GM12878 (cell line): ENCODE measurements at regions of chr19 and their contacts with region 1.

Region 1: GRCh38 chr19:36489118-36489919 is at the start of gene ZNF566:
- DNase-seq: peak; percentile 92
- ATAC-seq: peak; percentile 96
- H3K4me3 ChIP-seq: peak within 1 kb of the TSS; percentile 79
- H3K27ac ChIP-seq: peak within 1 kb of the TSS; percentile 93
- H3K4me1 ChIP-seq: no peaks in the 10 kb centered on the region; the same call in 1 of the 2 replicates
- H3K27me3 ChIP-seq: no peaks in the 10 kb centered on the region
- CTCF ChIP-seq: no peak
- EP300 ChIP-seq: no peak
- POLR2A ChIP-seq: peak; percentile 78
- RAD21 ChIP-seq: no peak
- polyA plus RNA-seq, gene ZNF566: 2.5 to 4.0 TPM

Region 2: DNA sequence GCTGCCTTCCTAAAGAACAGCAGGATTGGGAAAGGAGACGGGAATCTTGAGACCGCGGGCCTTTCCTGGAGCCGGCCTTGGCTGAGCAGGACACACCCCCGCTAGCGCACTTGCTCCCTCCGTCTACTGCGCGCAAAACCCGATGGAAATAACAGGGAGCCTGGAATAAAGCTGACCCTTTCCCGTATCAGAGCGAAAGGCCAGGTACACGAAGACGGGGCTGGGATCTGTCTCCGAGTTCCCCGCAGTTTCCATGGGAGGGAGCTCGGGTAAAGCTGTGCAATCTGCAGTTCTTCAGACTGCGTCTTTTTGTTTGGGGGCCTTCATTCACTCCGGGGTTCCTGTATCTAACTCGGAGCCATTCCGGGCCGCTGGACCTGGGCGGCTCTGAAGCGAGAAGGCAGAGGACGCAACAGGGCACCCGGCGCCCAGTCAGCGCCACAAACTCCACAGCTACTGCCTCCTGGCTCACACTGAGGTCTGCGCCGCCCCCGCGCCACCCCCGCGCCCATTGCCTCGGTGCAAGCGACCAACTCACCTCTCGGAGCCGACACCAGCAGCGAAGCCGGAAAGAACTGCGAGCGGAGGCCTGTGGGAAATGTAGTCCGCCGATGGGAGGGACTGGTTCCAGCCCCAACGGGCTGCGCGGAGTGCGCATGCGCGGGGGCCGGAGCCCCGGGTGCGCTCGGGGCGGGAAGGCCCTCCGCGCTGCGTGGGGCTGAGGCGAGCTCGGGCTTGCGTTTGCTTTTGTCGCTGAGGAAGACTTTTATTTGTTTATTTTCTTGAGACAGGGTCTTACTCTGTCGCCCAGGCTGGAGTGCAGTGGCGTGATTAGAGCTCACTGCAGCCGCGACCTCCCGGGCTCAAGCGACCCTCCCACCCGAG is 110.5 kb before region 1 on chr19 and contains the start of gene ZFP14:
- CTCF ChIA-PET with region 1: no interaction called
- POLR2A ChIA-PET with region 1: no interaction called
- RAD21 ChIA-PET with region 1: no interaction called
- SMC1A ChIA-PET with region 1: interaction called, 3 read pairs
- in situ Hi-C with region 1: no loop called
- intact Hi-C with region 1: loop called (anchors 5 kb)
- DNase-seq: peak; percentile 70
- ATAC-seq: peak; percentile 100
- H3K4me3 ChIP-seq: peak within 1 kb of the TSS; percentile 87
- H3K27ac ChIP-seq: peak within 1 kb of the TSS; percentile 42
- H3K4me1 ChIP-seq: no peaks in the 10 kb centered on the region
- H3K27me3 ChIP-seq: no peaks in the 10 kb centered on the region
- CTCF ChIP-seq: peak; percentile 41 to 56 (median 49); a peak in 5 of 6 replicates
- EP300 ChIP-seq: no peak
- POLR2A ChIP-seq: peak; percentile 77
- RAD21 ChIP-seq: peak; percentile 68
- polyA plus RNA-seq, gene ZFP14: 0.66 to 0.91 TPM

Region 3: DNA sequence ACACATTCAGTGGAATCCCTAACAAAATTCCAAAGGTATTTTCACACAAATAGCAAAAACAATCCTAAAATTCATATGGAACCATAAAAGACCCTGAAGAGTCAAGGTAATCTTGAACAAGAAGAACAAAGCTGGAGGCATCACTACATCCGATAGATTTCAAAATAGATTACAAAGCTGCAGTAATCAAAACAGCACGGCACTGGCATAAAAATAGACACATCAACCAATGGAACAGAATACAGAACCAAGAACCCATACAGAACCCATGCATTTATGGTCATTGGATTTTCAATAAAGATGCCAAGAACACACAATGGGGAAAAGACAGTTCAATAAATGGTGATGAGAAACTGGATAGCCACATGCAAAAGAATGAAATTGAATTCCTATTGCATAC is 32.5 kb before region 1 on chr19:
- CTCF ChIA-PET with region 1: no interaction called
- POLR2A ChIA-PET with region 1: no interaction called
- RAD21 ChIA-PET with region 1: no interaction called
- SMC1A ChIA-PET with region 1: no interaction called
- in situ Hi-C with region 1: no loop called
- intact Hi-C with region 1: no loop called
- DNase-seq: no peak
- ATAC-seq: no peak
- H3K4me3 ChIP-seq: no peak overlapping the region
- H3K27ac ChIP-seq: no peak overlapping the region
- H3K4me1 ChIP-seq: no peaks in the 10 kb centered on the region
- H3K27me3 ChIP-seq: no peaks in the 10 kb centered on the region
- CTCF ChIP-seq: no peak
- EP300 ChIP-seq: no peak
- POLR2A ChIP-seq: no peak
- RAD21 ChIP-seq: no peak

Region 4: GRCh38 chr19:36501973-36502372 is 12.7 kb after region 1 on chr19:
- CTCF ChIA-PET with region 1: no interaction called
- POLR2A ChIA-PET with region 1: no interaction called
- RAD21 ChIA-PET with region 1: no interaction called
- SMC1A ChIA-PET with region 1: no interaction called
- in situ Hi-C with region 1: no loop called
- intact Hi-C with region 1: no loop called
- DNase-seq: no peak
- ATAC-seq: no peak
- H3K4me3 ChIP-seq: no peak overlapping the region
- H3K27ac ChIP-seq: no peak overlapping the region
- H3K4me1 ChIP-seq: no peaks in the 10 kb centered on the region
- H3K27me3 ChIP-seq: no peaks in the 10 kb centered on the region
- CTCF ChIP-seq: no peak
- EP300 ChIP-seq: no peak
- POLR2A ChIP-seq: no peak
- RAD21 ChIP-seq: no peak